B cell (primary cell): ENCODE measurements at regions of chr14 and their contacts with region 1.

Region 1: GRCh38 chr14:72812292-72812911 is 81.5 kb downstream of the DPF3 start:
- DNase-seq: no peak
- ATAC-seq: no peak
- H3K4me3 ChIP-seq: no peak overlapping the region
- H3K4me3 Mint-ChIP-seq: no peak overlapping the region
- H3K27ac ChIP-seq: no peak overlapping the region
- H3K27ac Mint-ChIP-seq: no peak overlapping the region
- H3K4me1 ChIP-seq: peaks cover 10 to 20% of the 10 kb centered on the region in 2 donors
- H3K4me1 Mint-ChIP-seq: peaks cover 46% of the 10 kb centered on the region
- H3K27me3 ChIP-seq: no peaks in the 10 kb centered on the region
- H3K27me3 Mint-ChIP-seq: no peaks in the 10 kb centered on the region
- CTCF ChIP-seq: no peak

Region 2: GRCh38 chr14:72341237-72341636 is 471.2 kb before region 1 on chr14:
- CTCF ChIA-PET with region 1: no interaction called
- POLR2A ChIA-PET with region 1: no interaction called
- intact Hi-C with region 1: no loop called
- DNase-seq: no peak
- ATAC-seq: no peak
- H3K4me3 ChIP-seq: no peak overlapping the region
- H3K4me3 Mint-ChIP-seq: no peak overlapping the region
- H3K27ac ChIP-seq: no peak overlapping the region
- H3K27ac Mint-ChIP-seq: no peak overlapping the region
- H3K4me1 ChIP-seq: no peaks in the 10 kb centered on the region
- H3K4me1 Mint-ChIP-seq: no peaks in the 10 kb centered on the region
- H3K27me3 ChIP-seq: no peaks in the 10 kb centered on the region
- H3K27me3 Mint-ChIP-seq: peaks cover 32% of the 10 kb centered on the region
- CTCF ChIP-seq: no peak

Region 3: DNA sequence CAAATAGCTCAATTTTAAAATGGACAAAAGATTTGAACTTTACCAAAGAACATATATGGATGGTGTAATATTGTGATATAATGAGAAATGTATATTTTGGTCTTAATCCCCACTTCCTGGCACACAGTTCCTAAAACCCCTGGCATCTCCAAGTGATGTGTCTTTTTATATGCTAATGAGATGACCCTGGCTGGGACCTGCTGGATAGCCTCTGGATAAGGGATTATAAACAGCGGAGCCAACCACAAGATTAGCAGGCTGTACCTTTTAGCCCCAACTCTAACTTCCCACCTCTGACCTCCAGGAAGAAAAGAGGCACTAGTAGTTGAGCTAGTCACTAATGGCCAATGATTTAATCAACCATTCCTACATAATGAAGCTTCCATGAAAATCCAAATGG is 48.5 kb before region 1 on chr14:
- CTCF ChIA-PET with region 1: no interaction called
- POLR2A ChIA-PET with region 1: interaction called, 15 read pairs
- intact Hi-C with region 1: no loop called
- DNase-seq: no peak
- ATAC-seq: no peak
- H3K4me3 ChIP-seq: no peak overlapping the region
- H3K4me3 Mint-ChIP-seq: no peak overlapping the region
- H3K27ac ChIP-seq: no peak overlapping the region
- H3K27ac Mint-ChIP-seq: no peak overlapping the region
- H3K4me1 ChIP-seq: no peaks in the 10 kb centered on the region
- H3K4me1 Mint-ChIP-seq: no peaks in the 10 kb centered on the region
- H3K27me3 ChIP-seq: no peaks in the 10 kb centered on the region
- H3K27me3 Mint-ChIP-seq: no peaks in the 10 kb centered on the region
- CTCF ChIP-seq: no peak

Region 4: DNA sequence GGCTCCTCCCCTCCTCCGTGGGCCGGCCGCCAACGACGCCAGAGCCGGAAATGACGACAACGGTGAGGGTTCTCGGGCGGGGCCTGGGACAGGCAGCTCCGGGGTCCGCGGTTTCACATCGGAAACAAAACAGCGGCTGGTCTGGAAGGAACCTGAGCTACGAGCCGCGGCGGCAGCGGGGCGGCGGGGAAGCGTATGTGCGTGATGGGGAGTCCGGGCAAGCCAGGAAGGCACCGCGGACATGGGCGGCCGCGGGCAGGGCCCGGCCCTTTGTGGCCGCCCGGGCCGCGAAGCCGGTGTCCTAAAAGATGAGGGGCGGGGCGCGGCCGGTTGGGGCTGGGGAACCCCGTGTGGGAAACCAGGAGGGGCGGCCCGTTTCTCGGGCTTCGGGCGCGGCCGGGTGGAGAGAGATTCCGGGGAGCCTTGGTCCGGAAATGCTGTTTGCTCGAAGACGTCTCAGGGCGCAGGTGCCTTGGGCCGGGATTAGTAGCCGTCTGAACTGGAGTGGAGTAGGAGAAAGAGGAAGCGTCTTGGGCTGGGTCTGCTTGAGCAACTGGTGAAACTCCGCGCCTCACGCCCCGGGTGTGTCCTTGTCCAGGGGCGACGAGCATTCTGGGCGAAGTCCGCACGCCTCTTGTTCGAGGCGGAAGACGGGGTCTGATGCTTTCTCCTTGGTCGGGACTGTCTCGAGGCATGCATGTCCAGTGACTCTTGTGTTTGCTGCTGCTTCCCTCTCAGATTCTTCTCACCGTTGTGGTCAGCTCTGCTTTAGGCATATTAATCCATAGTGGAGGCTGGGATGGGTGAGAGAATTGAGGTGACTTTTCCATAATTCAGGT is 324.2 kb after region 1 on chr14 and contains the start of gene PSEN1:
- CTCF ChIA-PET with region 1: no interaction called
- POLR2A ChIA-PET with region 1: no interaction called
- intact Hi-C with region 1: no loop called
- DNase-seq: peak; percentile 99
- ATAC-seq: peak; percentile 94
- H3K4me3 ChIP-seq: peak within 1 kb of the TSS; percentile 65 to 98 (median 90)
- H3K4me3 Mint-ChIP-seq: peak within 1 kb of the TSS; percentile 94
- H3K27ac ChIP-seq: peak within 1 kb of the TSS; percentile 80 to 100
- H3K27ac Mint-ChIP-seq: peak within 1 kb of the TSS; percentile 94
- H3K4me1 ChIP-seq: peaks cover 13 to 16% of the 10 kb centered on the region in 2 donors
- H3K4me1 Mint-ChIP-seq: peaks cover 25% of the 10 kb centered on the region
- H3K27me3 ChIP-seq: no peaks in the 10 kb centered on the region
- H3K27me3 Mint-ChIP-seq: no peaks in the 10 kb centered on the region
- CTCF ChIP-seq: no peak
- total RNA-seq, gene PSEN1: 71.6 and 75.9 TPM in 2 replicates